Panc1 (cell line): ENCODE measurements at regions of chr15 and their contacts with region 1.

Region 1: DNA sequence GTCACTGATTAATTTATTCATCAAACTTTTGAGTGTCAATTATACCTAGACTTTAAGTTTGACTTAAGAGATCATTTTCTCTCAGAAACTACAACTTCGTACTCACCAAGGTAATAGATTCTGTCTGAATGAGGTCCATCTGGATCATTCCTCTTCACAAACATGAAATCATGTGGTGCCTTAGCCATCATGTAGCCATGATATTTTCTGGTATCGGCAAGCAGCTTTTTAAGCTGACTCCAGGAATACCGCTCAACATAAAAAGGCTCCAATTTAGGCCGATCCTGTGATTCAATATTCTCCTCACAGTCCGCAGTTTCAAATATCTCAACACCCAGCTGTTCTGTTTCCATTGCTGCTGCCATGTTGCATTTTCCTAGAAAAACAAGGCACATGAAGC is 5.3 kb downstream of the DPP8 start:
- DNase-seq: no peak
- ATAC-seq: no peak
- H3K4me3 ChIP-seq: no peak overlapping the region
- H3K27ac ChIP-seq: no peak overlapping the region
- H3K4me1 ChIP-seq: peaks cover 16% of the 10 kb centered on the region; the same call in 1 of the 2 replicates
- H3K27me3 ChIP-seq: no peaks in the 10 kb centered on the region
- CTCF ChIP-seq: no peak

Region 2: DNA sequence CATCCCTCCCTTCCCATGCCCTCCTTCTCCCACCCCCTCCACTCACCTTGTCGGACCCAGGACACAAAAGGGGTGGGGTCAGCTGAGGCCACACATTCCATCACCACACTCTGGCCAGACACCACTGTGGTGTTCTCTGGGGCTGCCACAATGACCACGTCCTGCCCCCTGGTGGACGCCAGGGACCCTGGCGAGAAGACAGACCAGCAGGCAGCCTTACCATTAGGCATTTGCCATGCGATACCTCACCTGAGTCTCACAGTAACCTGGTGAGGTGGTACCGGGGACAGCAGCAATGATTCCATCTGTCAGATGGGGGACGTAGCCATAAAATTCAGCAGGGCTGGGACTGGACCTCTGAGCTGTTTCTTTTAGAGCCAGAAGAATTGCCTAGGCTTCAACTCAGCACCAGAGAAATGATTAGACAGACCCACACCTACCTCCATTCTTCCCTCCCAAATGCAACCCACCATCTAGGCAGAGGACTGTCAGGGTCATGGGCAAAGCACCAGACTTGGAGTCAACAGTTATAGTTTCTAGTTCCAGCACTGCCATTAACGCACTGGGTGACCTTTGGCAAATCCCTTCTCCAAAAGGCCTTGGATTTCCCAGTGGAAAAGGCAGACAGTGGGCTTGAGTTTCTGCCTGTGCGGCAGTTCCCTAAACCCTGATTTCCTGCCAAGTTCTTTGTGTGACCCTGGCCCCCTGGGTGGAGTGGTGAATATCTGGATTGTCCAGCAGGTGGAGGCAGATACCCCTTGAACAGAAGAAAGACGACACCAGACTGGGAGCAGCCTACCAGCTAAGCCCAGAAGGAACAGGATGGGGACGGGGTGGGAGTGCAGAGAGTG is 111.2 kb before region 1 on chr15:
- CTCF ChIA-PET with region 1: no interaction called
- POLR2A ChIA-PET with region 1: interaction called, 10 read pairs
- in situ Hi-C with region 1: no loop called
- intact Hi-C with region 1: no loop called
- DNase-seq: no peak
- ATAC-seq: peak; percentile 95
- H3K4me3 ChIP-seq: no peak overlapping the region
- H3K27ac ChIP-seq: no peak overlapping the region
- H3K4me1 ChIP-seq: peaks cover 4% of the 10 kb centered on the region; the same call in 1 of the 2 replicates
- H3K27me3 ChIP-seq: no peaks in the 10 kb centered on the region
- CTCF ChIP-seq: peak; percentile 93